Posterior vena cava (tissue), 2 donors: ENCODE measurements at regions of chr13 and their contacts with region 1.

Region 1: GRCh38 chr13:52141297-52141696 is 12.4 kb upstream of the NEK5 start:
- DNase-seq: no peak

Region 2: GRCh38 chr13:52159321-52160086 is 18.2 kb after region 1 on chr13 and contains the start of gene NEK3:
- intact Hi-C with region 1: loop called in 1 of 2 experiments (anchors 1 kb)
- DNase-seq: peak; percentile 90
- total RNA-seq, gene NEK3: 12.2 to 17.3 TPM